PC-3 (cell line): ENCODE measurements at regions of chr1 and their contacts with region 1.

Region 1: DNA sequence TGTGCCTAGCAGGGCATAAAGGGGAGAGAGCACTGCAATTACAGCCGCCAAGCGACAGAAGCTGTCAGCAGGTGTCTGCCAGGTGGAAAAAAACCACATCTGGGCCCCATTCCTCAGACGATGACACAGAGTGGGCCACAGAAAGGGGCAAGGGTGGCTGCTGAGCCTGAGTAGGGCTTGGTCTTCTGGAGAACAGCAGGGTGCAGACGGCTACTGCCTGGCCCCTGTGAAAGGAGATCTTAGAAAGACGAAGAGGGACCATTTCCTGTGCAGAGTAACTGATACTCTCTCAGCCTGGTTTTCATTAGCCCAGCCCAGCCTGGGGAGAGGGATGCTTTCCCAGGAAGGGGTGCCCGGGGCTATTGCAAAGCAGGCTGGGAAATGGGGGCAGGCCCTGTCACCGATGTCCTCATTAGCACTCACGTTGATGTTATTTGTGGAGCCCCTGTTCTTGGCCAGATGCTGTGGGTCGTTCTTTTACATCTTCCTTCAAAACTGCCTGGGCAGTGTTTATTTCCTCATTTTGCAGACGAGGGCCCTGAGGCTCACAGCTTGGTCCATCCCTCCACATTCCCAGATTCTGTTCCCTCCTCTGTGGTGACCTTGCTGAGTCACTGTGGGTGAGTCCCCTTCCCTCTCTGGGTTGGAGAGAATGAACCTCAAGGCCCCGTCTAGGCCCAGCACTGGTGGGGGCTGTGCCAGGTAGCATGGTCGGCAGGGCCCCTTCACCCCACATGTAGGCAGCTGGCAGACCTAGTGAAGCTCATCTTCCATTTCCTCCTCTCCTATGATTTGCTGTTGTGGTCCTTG is 472.8 kb downstream of the PTPRU start:
- DNase-seq: peak; percentile 93
- ATAC-seq: peak; percentile 68
- H3K4me3 ChIP-seq: peak overlapping the region; percentile 14; the same call in 1 of the 2 replicates
- H3K27ac ChIP-seq: peak overlapping the region; percentile 98
- H3K4me1 ChIP-seq: peaks cover 52% of the 10 kb centered on the region
- H3K27me3 ChIP-seq: no peaks in the 10 kb centered on the region
- CTCF ChIP-seq: no peak

Region 2: DNA sequence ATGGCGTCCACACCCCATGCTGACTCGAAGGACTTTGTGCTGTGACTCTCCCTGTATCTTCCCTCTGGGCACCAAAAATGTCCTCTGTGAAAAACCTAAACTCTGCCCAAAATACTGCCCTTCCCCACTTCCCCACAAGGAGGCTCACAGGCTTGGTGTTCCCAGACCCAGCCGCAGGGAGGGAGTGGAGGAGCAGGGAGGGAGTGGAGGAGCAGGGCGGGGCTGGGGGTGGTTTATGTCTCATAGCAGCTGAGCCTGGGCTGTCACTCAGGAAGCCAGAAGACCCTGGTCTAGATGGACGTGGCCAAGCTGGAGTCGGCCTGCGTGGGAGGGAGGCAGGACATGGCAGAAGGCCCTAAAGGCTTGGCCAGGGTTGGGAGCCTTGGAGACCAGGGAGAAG is 11.1 kb before region 1 on chr1:
- CTCF ChIA-PET with region 1: interaction called, 10 read pairs
- POLR2A ChIA-PET with region 1: no interaction called
- intact Hi-C with region 1: no loop called
- DNase-seq: peak; percentile 85
- ATAC-seq: peak; percentile 97
- H3K4me3 ChIP-seq: no peak overlapping the region
- H3K27ac ChIP-seq: no peak overlapping the region
- H3K4me1 ChIP-seq: peaks cover 10% of the 10 kb centered on the region
- H3K27me3 ChIP-seq: no peaks in the 10 kb centered on the region
- CTCF ChIP-seq: peak; percentile 84

Region 3: GRCh38 chr1:29736582-29737188 is 27.6 kb after region 1 on chr1:
- CTCF ChIA-PET with region 1: no interaction called
- POLR2A ChIA-PET with region 1: no interaction called
- intact Hi-C with region 1: no loop called
- DNase-seq: peak; percentile 70
- ATAC-seq: no peak
- H3K4me3 ChIP-seq: no peak overlapping the region
- H3K27ac ChIP-seq: no peak overlapping the region
- H3K4me1 ChIP-seq: no peaks in the 10 kb centered on the region
- H3K27me3 ChIP-seq: peaks cover 17% of the 10 kb centered on the region
- CTCF ChIP-seq: no peak

Region 4: DNA sequence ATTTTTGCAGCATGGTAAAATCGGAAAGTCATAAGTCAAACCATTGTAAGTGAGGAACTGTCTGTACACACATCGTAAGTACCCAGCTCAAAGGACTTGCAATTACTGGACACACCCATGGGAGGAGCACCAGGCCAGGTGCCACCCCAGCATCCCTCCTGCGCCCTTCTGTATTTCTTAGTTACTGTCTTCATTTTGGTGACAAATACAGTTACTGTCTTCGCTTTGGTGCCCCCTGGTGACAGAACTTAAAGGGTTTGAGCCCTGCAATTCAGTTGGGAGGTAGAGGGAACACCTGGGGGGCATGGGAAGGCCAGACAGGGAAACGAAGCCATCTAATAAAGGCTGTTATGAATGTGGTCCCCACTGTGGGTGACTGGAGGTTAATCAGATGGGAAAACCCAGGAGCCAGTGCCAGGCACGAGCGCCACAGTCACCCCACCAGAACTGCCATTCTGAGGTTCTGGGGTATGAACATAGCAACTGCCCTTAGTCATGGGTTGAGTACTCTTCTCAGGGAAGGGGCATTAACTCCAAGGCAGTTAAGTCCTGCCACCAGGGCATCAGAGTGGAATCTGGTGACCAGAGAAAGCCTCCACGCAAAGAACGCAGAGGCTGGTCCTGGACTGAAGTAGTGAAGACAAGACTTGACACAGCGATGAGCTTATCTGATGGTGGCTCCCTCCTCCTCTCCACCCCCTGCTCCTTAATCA is 140.1 kb after region 1 on chr1:
- CTCF ChIA-PET with region 1: interaction called, 4 read pairs
- POLR2A ChIA-PET with region 1: no interaction called
- intact Hi-C with region 1: loop called (anchors 2 kb)
- DNase-seq: peak; percentile 83
- ATAC-seq: peak; percentile 81
- H3K4me3 ChIP-seq: no peak overlapping the region
- H3K27ac ChIP-seq: no peak overlapping the region
- H3K4me1 ChIP-seq: no peaks in the 10 kb centered on the region
- H3K27me3 ChIP-seq: peaks cover 3% of the 10 kb centered on the region; the same call in 1 of the 2 replicates
- CTCF ChIP-seq: peak; percentile 79